Posterior vena cava (tissue), 2 donors: ENCODE measurements at regions of chr15 and their contacts with region 1.

Region 1: DNA sequence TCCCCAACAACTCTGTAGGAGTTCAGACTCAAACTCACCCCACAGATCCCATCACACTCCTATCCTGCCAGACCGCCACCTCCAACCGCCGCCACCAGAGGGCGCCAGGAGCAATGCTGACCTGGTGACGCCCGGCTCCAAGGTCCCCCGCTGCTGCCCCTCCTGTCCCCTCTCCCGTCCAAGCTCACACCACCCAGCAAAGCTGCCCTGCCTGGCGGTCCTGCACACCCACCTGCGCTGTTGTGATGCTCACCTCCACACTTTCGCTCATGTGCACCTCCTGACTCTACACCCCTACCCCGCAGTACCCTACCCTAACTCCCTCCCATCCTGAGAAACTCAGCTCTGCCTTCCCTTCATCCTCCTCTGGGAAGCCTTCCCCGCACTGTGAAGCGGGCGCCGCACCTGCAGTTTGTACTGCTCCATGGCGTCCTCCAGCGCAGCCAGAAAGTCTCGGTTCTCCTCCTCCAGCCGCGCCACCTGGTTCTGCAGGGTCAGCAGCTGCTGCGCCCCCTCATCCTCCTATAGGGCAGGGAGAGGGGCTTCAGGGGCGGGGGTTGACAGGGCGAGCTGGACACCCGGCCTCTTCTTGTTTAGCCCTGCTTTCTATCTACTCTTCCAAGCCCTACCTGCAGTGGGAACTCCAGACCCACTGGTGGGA is 7.9 kb downstream of the KIF7 start:
- DNase-seq: peak; percentile 94

Region 2: DNA sequence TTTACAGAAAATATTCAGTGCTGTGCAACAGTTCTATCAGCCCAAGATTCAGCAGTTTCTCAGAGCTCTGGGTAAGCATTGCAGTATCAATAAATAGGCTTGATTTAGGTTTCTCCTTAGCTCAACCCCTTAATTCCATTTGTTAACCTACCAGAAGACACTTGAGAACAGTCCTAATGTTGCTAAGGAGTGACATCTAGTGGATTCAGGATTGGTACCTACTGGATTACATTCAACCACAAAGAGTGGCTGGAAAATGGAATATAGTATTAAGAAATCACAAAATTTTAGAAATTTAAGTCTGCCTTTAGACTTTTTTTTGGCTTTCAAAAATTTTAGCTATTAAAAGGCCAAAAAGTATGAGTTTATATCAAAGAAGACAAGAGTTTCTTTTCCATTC is 347.4 kb before region 1 on chr15:
- intact Hi-C with region 1: no loop called
- DNase-seq: no peak

Region 3: GRCh38 chr15:89494935-89495637 is 152.2 kb before region 1 on chr15:
- intact Hi-C with region 1: no loop called
- DNase-seq: peak; percentile 59

Region 4: GRCh38 chr15:89587952-89588351 is 59.4 kb before region 1 on chr15:
- intact Hi-C with region 1: loop called in 1 of 2 experiments (anchors 10 kb)
- DNase-seq: no peak

Region 5: DNA sequence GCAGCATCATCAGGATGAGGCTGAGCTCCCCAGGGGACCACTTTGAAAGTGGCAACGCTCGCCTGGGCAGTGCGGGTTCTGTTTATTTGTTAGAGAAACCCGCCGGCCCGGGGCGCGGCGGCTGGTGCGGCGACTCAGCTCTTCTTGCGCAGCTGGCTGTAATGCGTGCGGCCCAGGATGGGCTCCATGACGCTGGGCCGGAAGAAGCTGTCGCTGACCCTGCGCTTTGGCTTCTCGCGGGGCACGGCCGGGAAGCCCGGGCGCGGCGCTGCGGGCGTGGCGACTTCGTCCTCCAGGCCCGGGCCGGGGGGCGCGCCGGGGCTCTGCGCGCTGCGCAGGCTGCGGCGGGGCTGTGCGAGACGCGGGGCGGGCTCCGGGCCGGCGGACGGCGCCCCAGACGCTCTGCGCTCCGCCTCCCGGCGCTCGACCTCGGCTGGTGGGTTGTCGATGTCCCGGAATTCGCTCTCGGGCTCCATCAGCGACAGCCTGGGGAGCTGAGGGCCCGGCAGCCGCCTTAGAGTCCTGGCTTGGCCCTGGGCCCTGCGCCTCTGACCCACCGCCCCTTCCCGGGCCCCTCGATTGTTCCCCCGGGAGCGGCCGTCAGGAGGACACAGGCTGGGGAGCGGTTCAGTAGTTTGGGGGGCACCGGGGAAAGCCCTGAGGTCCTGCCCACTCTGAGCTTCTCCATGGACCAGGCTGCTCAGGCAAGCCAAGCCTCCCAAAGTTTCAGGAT is 18.3 kb after region 1 on chr15:
- intact Hi-C with region 1: no loop called
- DNase-seq: peak; percentile 90

Region 6: DNA sequence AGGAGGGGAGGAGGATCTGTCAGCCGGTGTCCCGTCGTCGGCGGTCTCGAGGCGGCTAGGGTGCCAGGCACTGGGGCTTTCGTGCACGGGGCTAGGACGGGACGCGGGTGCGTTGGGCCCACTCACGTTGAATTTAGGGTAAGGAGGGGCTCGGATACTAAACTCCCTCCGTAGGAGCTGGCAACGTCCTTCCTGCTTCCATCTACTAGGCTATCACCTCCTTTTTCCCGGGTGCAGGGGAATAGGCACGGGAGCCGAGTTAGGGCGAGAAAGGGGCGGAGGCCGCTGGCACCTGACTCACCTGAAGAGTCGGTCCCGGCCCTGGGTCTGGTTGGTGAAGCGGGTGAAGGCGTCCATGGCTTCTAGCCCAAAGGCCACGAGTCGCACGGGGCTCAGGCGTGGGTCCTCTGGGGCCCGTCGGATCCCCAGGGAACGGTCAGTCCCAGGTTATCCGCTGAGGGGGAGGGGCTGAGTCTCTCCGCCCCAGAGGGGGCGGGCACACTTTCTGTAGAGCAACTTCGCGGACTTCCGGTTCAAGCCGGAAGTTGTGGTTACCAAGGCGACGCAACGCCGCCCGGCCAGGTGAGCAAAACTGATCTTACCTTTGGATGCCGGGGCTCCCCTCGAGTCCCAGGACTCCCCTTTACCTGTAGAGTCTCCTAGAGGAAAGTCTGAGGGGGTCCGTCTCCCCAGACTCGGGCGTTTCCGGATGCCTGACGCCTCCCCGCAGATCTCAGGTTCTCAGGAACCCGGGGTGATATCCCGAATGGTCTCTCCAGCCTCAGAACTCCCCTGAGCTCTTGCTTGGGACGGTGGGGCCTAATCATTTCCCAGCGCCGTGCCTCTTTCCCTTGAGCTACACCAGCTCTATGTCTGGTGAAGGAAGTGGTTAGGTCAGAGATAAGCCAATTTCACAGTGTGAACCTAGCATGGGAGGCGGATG is 43.2 kb after region 1 on chr15 and contains the starts of genes PEX11A and WDR93:
- intact Hi-C with region 1: loop called in 1 of 2 experiments (anchors 5 kb)
- DNase-seq: peak; percentile 94
- total RNA-seq, gene PEX11A: 4.9 to 7.1 TPM
- total RNA-seq, gene WDR93: not detected